ENCODE measurements at regions of chr1 and their contacts with region 1.

Region 1: GRCh38 chr1:9867408-9868243 is 42.4 kb downstream of the CTNNBIP1 start:
- DNase-seq: peak; percentile 75 to 81
- H3K4me3 ChIP-seq: no peak overlapping the region
- H3K27ac ChIP-seq: no peak overlapping the region
- H3K4me1 ChIP-seq: no peaks in the 10 kb centered on the region
- H3K27me3 ChIP-seq: no peaks in the 10 kb centered on the region
- CTCF ChIP-seq: peak; percentile 92 to 98 (median 96)
- POLR2A ChIP-seq: no peak

Region 2: GRCh38 chr1:9787702-9788101 is 79.9 kb before region 1 on chr1:
- intact Hi-C with region 1: loop called (anchors 2 kb)
- DNase-seq: no peak
- H3K4me3 ChIP-seq: no peak overlapping the region
- H3K27ac ChIP-seq: no peak overlapping the region
- H3K4me1 ChIP-seq: peaks cover 4 to 8% of the 10 kb centered on the region in 2 donors
- H3K27me3 ChIP-seq: no peaks in the 10 kb centered on the region
- CTCF ChIP-seq: no peak
- POLR2A ChIP-seq: no peak